ENCODE measurements at regions of chr1 and their contacts with region 1.

Region 1: GRCh38 chr1:198275597-198275996 is 118.8 kb downstream of the NEK7 start:
- DNase-seq: no peak
- ATAC-seq: no peak

Region 2: DNA sequence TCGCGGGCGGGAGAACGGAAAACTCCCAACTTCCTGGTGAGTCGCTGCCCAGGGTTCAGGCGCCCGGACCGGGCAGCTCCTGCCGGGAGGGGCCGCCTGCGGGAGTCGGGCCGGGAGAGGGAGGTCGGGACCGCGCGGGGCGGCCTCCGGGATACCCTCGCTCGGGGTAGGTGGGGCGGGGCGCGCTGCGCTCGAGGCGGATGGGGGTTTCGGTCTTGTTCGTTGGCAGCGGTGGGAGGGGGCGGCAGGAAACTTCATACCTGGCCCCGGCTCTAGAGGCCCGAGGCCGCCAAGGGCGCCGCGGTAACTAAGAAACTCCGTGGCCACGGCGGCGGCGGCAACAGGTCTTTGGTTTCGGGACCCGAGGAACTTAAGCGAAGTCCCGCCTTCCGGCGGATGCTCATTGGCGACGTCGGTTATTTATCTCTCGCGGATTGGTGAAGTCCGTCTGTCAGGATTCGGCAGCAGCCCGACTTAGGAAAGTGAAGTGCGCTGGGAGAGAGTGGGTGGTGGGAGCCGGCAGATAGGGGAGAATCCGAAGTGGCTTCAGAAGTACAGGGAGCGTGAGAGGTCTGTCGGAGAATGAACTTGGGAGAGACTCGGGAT is 118.3 kb before region 1 on chr1:
- intact Hi-C with region 1: loop called in 1 of 2 experiments (anchors 5 kb)
- DNase-seq: peak; percentile 91
- ATAC-seq: peak; percentile 71 to 74

Region 3: DNA sequence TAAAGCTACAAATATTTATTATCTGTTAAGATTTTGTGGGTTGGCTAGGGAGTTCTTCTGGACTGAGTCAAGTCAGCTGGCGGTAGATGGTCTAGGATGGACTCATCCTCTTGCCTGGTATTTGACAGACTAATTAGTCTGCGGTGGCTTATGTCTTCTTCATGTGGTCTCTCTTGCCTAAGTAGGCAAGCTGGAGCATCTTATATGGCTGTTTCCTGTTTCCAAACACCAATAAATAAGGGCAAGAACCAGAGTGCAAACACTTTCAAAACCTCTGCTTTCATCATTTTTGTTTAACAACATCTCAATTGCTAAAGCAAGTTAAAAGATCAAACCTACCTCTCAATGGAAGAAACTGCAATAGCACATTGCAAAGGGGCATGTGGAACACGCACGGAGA is 848.0 kb after region 1 on chr1:
- intact Hi-C with region 1: no loop called
- DNase-seq: no peak
- ATAC-seq: no peak

Measured in left cardiac atrium (tissue), 4 donors.